AG04450 (cell line): ENCODE measurements at regions of chr13 and their contacts with region 1.

Region 1: DNA sequence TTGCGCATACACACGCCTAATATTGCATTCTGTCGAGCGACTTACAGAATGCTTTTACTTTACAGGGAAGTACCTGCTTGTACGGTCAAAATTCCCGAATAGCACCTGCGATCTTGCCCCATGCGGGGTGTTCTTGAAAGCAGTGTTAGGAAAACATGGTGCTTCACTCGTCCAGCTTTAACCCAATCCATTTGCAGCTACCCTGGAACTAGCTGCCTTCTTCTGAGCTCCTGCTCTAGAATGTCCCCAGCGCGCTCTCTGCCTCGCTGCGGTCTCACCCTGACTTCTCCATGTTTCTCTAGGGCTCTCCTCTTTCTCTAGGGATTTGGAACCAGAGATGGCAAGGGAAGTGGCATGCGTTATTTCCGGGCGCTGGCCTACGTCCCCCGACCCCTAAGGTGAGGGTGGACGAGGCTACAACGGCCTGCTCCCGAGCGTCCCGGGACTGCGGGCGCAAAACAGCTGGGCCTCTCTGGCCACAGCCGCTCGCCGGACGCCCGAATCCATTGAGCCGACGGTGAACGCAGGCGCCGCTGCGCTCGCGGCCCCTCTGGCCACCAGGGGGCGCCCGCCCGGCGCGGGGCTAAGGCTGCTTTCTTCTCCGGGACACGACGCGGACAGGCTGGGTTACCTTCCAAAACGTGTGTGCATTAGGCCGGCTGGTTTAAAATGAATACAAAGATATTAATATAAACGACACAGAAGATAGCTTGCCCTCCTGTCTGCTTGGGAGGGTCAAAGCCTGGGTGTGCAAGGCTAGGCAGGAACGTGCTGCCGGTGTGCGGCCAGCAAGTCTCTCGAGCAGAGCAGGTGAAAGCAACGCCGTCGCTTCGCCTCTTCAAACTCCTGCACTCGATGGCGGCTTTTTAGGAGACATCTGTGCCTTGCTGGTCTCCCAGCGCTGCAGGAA is 1.8 kb upstream of the SPRY2 start:
- DNase-seq: no peak
- H3K4me3 ChIP-seq: peak overlapping the region; percentile 95
- H3K27ac ChIP-seq: peak overlapping the region; percentile 65
- H3K27me3 ChIP-seq: no peaks in the 10 kb centered on the region
- CTCF ChIP-seq: peak; percentile 84

Region 2: GRCh38 chr13:79581870-79582315 is 760.8 kb before region 1 on chr13:
- CTCF ChIA-PET with region 1: no interaction called
- POLR2A ChIA-PET with region 1: no interaction called
- DNase-seq: no peak
- H3K4me3 ChIP-seq: no peak overlapping the region
- H3K27ac ChIP-seq: no peak overlapping the region
- H3K27me3 ChIP-seq: no peaks in the 10 kb centered on the region
- CTCF ChIP-seq: no peak

Region 3: DNA sequence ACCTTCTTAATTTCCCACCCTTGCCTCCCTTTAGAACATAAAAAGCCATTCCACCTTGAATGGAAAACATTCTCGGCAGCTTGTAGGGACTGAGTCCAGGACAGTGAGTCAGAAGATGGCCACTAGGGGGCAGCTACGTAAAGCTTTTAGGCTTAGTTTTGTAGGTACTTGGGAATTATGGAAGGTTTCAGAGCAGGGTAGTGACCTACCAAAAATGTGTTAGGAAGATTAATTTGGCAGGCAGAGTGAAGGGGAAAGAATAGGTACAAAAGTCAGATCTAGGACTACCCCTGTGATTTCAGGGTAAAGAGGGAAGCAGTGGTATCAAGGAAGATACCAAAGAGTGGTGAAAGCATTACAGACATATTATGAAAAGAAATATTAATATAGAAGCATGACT is 663.4 kb before region 1 on chr13:
- CTCF ChIA-PET with region 1: interaction called, 32 read pairs
- POLR2A ChIA-PET with region 1: interaction called, 5 read pairs
- DNase-seq: peak; percentile 26
- H3K4me3 ChIP-seq: no peak overlapping the region
- H3K27ac ChIP-seq: no peak overlapping the region
- H3K27me3 ChIP-seq: no peaks in the 10 kb centered on the region
- CTCF ChIP-seq: peak; percentile 74

Region 4: DNA sequence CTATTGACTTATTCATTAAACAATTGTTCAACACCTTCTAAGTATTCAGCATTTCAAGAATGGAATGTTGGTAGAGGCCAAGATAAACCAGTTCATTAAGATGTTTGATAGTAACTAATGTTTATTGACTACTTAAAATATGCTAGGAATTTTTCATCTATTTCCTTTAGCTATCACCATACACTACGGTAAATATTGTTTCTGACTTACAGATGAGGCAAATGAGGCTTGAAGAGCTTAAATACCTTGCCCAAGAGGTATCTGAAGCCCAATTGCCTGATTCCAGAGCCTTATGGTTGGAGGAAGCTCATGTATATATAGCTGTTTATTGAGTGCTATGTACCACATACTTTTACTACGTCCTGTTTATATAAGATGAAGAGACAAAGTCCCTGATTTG is 575.6 kb before region 1 on chr13:
- CTCF ChIA-PET with region 1: interaction called, 15 read pairs
- POLR2A ChIA-PET with region 1: interaction called, 4 read pairs
- DNase-seq: no peak
- H3K4me3 ChIP-seq: no peak overlapping the region
- H3K27ac ChIP-seq: no peak overlapping the region
- H3K27me3 ChIP-seq: no peaks in the 10 kb centered on the region
- CTCF ChIP-seq: no peak

Region 5: DNA sequence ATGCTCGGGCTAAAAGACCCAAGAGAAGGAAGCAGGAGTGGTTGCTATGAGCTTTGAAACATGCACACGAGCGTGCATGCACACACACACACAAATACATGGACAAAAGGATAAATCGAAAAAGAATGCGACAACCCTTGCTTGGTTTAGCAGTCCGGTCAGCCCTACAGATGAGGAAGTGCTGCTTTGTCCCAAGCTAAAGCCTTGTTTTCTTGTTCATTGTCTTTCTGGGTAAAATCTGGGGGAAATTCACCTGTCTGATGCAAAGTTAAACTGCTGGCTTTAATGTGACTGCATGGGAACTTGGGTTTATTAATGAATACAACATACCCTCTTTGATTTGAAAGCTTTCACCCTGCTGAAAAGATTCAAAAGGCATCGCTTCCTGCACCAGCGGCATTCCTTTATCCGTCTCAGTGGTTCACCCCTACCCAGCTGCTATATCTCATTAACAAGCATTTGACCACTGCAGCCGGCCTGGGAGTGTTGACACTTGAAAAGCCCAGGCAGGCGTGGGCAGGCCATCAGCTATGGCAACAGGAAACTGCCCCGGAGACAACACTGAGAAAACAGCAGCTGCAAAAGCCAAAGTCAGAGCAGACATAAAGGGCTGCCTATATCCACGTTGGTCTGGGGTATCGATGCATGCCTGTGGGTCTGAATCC is 560.1 kb before region 1 on chr13:
- CTCF ChIA-PET with region 1: interaction called, 19 read pairs
- POLR2A ChIA-PET with region 1: interaction called, 3 read pairs
- DNase-seq: peak; percentile 44
- H3K4me3 ChIP-seq: no peak overlapping the region
- H3K27ac ChIP-seq: peak overlapping the region; percentile 34
- H3K27me3 ChIP-seq: no peaks in the 10 kb centered on the region
- CTCF ChIP-seq: no peak

Region 6: GRCh38 chr13:80048802-80049201 is 293.9 kb before region 1 on chr13:
- CTCF ChIA-PET with region 1: interaction called, 12 read pairs
- POLR2A ChIA-PET with region 1: no interaction called
- DNase-seq: peak; percentile 84
- H3K4me3 ChIP-seq: no peak overlapping the region
- H3K27ac ChIP-seq: no peak overlapping the region
- H3K27me3 ChIP-seq: no peaks in the 10 kb centered on the region
- CTCF ChIP-seq: no peak

Region 7: DNA sequence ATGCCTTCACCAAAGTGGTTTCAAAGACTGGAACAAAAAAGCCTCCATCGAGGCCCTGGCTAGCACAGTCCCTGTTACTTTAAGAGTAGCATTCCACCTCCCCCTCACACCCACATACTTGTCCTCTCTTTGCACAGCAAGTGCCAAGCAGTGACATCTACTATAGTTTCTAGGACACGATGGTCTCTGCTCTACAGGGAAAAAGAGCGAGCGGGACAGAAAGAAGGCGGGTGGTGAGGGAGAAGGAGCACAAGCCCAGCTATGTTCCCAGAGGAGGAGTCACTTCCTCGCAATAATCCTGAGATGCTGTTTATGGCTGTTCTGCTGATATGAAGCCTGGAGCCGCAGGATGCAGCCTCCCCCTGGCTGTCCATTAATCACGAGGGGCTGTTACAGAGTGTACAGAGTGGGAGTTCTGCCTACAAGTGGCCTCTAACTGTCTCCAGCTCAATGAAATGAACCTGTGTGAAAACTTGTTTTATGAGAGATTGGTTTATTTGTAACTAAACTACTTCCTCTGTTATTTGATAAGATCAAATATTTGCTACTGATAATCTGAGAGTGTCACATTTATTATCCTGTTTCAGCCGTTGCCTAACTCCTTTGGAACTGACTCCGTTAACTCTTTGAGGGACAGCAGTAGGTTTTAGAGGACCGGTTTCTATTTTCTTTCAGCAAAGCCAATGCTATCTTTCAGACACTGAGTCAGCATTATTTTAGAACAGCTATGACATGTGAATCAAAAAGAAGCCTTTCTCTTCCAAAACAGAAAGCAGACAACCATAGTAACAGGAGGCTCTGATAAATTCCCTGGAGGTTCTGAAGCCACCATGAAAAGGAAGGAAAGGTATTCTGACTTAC is 209.8 kb before region 1 on chr13:
- CTCF ChIA-PET with region 1: interaction called, 12 read pairs
- POLR2A ChIA-PET with region 1: no interaction called
- DNase-seq: no peak
- H3K4me3 ChIP-seq: peak overlapping the region; percentile 44
- H3K27ac ChIP-seq: peak overlapping the region; percentile 43
- H3K27me3 ChIP-seq: no peaks in the 10 kb centered on the region
- CTCF ChIP-seq: 0 out of 2 replicates have a peak, but pooled peaks have one; percentile 1

Region 8: GRCh38 chr13:80313668-80314278 is 29.0 kb before region 1 on chr13:
- CTCF ChIA-PET with region 1: interaction called, 14 read pairs
- POLR2A ChIA-PET with region 1: no interaction called
- DNase-seq: no peak
- H3K4me3 ChIP-seq: no peak overlapping the region
- H3K27ac ChIP-seq: no peak overlapping the region
- H3K27me3 ChIP-seq: no peaks in the 10 kb centered on the region
- CTCF ChIP-seq: no peak

Region 9: DNA sequence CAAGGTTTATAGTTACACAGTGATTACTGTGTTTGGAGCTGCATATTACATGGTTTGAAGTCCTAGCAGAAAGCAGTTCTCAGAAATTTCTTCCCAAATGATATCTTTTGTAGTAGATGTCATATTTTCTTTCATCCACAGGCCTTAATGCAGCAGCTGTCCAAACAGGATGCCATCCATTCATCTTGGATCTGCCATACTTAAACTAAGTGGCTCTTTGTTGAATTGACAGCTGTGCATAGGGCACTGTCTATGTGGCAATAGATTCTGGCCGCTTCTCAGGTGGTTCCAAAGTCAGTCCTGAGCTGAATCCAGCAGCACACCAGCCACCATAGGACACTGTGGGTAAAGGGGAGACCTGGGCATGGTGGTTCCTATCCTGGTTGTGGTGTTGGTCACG is 39.9 kb after region 1 on chr13:
- CTCF ChIA-PET with region 1: no interaction called
- POLR2A ChIA-PET with region 1: no interaction called
- DNase-seq: no peak
- H3K4me3 ChIP-seq: no peak overlapping the region
- H3K27ac ChIP-seq: no peak overlapping the region
- H3K27me3 ChIP-seq: no peaks in the 10 kb centered on the region
- CTCF ChIP-seq: no peak

Region 10: DNA sequence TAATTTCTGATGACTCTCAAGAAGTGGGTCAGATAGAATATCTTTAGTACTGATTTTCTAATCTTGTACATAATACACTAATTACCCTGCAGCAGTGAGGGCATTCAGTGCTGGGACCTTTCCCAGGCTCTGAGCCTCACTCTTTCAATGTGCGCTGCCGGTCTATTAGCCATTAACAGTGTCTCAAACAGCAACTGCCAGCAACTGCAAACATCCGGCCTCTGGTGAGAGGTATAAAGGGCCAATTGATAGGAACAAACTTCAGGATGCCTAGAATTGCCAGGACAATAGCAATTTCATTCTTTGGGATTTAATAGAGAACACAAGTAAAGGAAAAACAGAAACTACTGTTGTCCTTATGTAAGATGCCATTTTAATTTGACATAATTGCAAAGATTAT is 602.6 kb after region 1 on chr13:
- CTCF ChIA-PET with region 1: no interaction called
- POLR2A ChIA-PET with region 1: no interaction called
- DNase-seq: no peak
- H3K4me3 ChIP-seq: no peak overlapping the region
- H3K27ac ChIP-seq: no peak overlapping the region
- H3K27me3 ChIP-seq: no peaks in the 10 kb centered on the region
- CTCF ChIP-seq: no peak